ENCODE measurements at regions of chr14 and their contacts with region 1.

Region 1: GRCh38 chr14:74084277-74085046 is at the starts of genes ALDH6A1 and LIN52:
- DNase-seq: peak; percentile 94
- ATAC-seq: peak; percentile 87
- H3K4me3 Mint-ChIP-seq: peak within 1 kb of the TSS; percentile 99
- H3K27ac Mint-ChIP-seq: peak within 1 kb of the TSS; percentile 93
- H3K4me1 Mint-ChIP-seq: peaks cover 37% of the 10 kb centered on the region
- H3K27me3 Mint-ChIP-seq: no peaks in the 10 kb centered on the region
- CTCF ChIP-seq: no peak
- total RNA-seq, gene ALDH6A1: 9.8 and 11.5 TPM in 2 replicates
- total RNA-seq, gene LIN52: 7.6 and 12.4 TPM in 2 replicates

Region 2: DNA sequence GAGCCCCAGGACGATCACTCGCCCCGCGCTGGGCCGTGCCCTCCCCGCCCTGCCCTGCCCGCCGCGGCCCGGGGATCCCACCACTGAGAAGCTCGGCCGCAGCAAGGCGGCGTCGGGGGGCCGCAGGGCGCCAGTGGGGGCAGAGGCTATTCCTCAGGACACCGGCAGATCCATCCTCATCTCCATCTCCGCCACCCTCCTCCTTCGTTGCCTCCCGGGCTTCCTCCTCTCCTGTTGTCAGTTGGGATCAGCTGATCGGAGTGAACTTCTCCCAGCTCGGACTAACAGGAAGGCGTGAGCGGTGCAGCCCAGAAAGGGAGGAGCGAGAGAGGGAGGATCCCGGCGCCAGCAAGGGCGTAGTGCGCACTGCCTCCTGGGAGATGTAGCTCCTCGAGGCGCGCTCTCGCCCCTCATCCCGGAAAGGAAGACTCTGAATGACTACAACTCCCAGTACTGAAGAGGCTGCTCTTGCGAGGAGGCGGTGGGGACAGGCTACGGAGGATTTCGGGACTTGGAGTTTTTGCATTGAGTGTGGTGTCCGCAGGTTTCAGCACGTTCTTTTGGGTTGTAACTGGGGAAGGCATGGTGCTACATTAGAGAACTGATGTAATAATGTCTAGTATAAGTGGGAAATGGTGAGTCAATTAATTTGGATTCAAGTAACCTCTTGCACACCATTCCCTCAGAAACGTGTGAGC is 1057.5 kb before region 1 on chr14 and contains the start of gene ZFYVE1:
- CTCF ChIA-PET with region 1: no interaction called
- POLR2A ChIA-PET with region 1: no interaction called
- intact Hi-C with region 1: loop called (anchors 1 kb)
- DNase-seq: peak; percentile 76
- ATAC-seq: peak; percentile 99
- H3K4me3 Mint-ChIP-seq: peak within 1 kb of the TSS; percentile 98
- H3K27ac Mint-ChIP-seq: peak within 1 kb of the TSS; percentile 88
- H3K4me1 Mint-ChIP-seq: peaks cover 42% of the 10 kb centered on the region
- H3K27me3 Mint-ChIP-seq: no peaks in the 10 kb centered on the region
- CTCF ChIP-seq: no peak
- total RNA-seq, gene ZFYVE1: 12.7 and 16.5 TPM in 2 replicates

Region 3: DNA sequence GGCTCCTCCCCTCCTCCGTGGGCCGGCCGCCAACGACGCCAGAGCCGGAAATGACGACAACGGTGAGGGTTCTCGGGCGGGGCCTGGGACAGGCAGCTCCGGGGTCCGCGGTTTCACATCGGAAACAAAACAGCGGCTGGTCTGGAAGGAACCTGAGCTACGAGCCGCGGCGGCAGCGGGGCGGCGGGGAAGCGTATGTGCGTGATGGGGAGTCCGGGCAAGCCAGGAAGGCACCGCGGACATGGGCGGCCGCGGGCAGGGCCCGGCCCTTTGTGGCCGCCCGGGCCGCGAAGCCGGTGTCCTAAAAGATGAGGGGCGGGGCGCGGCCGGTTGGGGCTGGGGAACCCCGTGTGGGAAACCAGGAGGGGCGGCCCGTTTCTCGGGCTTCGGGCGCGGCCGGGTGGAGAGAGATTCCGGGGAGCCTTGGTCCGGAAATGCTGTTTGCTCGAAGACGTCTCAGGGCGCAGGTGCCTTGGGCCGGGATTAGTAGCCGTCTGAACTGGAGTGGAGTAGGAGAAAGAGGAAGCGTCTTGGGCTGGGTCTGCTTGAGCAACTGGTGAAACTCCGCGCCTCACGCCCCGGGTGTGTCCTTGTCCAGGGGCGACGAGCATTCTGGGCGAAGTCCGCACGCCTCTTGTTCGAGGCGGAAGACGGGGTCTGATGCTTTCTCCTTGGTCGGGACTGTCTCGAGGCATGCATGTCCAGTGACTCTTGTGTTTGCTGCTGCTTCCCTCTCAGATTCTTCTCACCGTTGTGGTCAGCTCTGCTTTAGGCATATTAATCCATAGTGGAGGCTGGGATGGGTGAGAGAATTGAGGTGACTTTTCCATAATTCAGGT is 947.9 kb before region 1 on chr14 and contains the start of gene PSEN1:
- CTCF ChIA-PET with region 1: no interaction called
- POLR2A ChIA-PET with region 1: no interaction called
- intact Hi-C with region 1: loop called (anchors 5 kb)
- DNase-seq: peak; percentile 99
- ATAC-seq: peak; percentile 92
- H3K4me3 Mint-ChIP-seq: peak within 1 kb of the TSS; percentile 95
- H3K27ac Mint-ChIP-seq: peak within 1 kb of the TSS; percentile 98
- H3K4me1 Mint-ChIP-seq: peaks cover 33% of the 10 kb centered on the region
- H3K27me3 Mint-ChIP-seq: no peaks in the 10 kb centered on the region
- CTCF ChIP-seq: no peak
- total RNA-seq, gene PSEN1: 38.6 and 42.9 TPM in 2 replicates

Region 4: GRCh38 chr14:73397810-73398209 is 686.7 kb before region 1 on chr14:
- CTCF ChIA-PET with region 1: no interaction called
- POLR2A ChIA-PET with region 1: no interaction called
- intact Hi-C with region 1: no loop called
- DNase-seq: no peak
- ATAC-seq: no peak
- H3K4me3 Mint-ChIP-seq: no peak overlapping the region
- H3K27ac Mint-ChIP-seq: no peak overlapping the region
- H3K4me1 Mint-ChIP-seq: peaks cover 63% of the 10 kb centered on the region
- H3K27me3 Mint-ChIP-seq: no peaks in the 10 kb centered on the region
- CTCF ChIP-seq: no peak

Region 5: GRCh38 chr14:73633116-73634010 is 451.1 kb before region 1 on chr14:
- CTCF ChIA-PET with region 1: no interaction called
- POLR2A ChIA-PET with region 1: no interaction called
- intact Hi-C with region 1: no loop called
- DNase-seq: peak; percentile 52
- ATAC-seq: peak; percentile 83
- H3K4me3 Mint-ChIP-seq: peak overlapping the region; percentile 83
- H3K27ac Mint-ChIP-seq: peak overlapping the region; percentile 12
- H3K4me1 Mint-ChIP-seq: peaks cover 4% of the 10 kb centered on the region
- H3K27me3 Mint-ChIP-seq: peaks cover 11% of the 10 kb centered on the region
- CTCF ChIP-seq: no peak

Region 6: GRCh38 chr14:73851644-73852382 is 232.6 kb before region 1 on chr14 and contains the start of gene PTGR2:
- CTCF ChIA-PET with region 1: no interaction called
- POLR2A ChIA-PET with region 1: no interaction called
- intact Hi-C with region 1: loop called (anchors 5 kb)
- DNase-seq: peak; percentile 81
- ATAC-seq: peak; percentile 96
- H3K4me3 Mint-ChIP-seq: peak within 1 kb of the TSS; percentile 93
- H3K27ac Mint-ChIP-seq: peak within 1 kb of the TSS; percentile 96
- H3K4me1 Mint-ChIP-seq: peaks cover 21% of the 10 kb centered on the region
- H3K27me3 Mint-ChIP-seq: no peaks in the 10 kb centered on the region
- CTCF ChIP-seq: no peak
- total RNA-seq, gene PTGR2: 4.6 and 4.8 TPM in 2 replicates

Region 7: DNA sequence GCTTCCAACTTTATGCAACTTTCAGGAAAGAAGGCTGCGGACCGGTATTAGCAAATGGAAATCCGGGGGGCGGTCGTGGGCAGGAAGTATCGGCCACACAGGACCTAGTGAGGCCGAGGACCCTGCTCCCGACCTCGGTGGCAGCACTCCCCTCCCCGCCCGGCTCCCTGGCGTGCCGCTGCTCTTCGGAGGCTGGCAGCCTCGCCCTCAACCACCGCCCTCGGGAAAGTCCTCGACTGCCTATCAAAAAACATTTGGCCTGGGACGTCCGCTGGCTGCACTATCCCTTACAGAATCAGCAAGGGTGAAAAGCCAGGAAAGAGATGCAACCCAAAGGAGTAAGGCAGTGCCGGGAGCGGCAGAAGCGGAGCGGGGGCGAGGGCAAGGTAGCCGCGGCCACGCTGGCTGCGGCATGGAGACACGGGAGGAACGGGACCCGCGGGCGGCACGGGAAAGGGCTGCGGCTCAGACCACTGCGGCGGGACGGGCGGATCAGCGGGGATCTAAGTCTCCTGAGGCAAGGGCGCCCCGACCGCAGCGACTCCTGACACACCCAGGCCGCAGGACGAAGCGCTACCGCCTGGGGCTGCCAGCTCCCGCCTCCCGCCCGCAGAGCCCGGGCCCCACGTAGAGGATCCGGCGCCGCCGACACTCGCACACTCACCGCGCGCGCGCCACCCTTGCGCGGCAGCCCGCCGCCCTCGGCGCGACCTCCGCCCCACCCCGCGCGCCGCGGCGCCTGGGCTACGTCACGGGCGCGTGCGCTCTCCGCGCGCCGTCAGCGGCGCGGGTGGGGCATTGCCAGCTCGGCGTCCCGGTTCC is 65.7 kb before region 1 on chr14 and contains the starts of genes BBOF1 and ENTPD5:
- CTCF ChIA-PET with region 1: no interaction called
- POLR2A ChIA-PET with region 1: no interaction called
- intact Hi-C with region 1: loop called (anchors 1 kb)
- DNase-seq: peak; percentile 82
- ATAC-seq: peak; percentile 96
- H3K4me3 Mint-ChIP-seq: peak within 1 kb of the TSS; percentile 95
- H3K27ac Mint-ChIP-seq: peak within 1 kb of the TSS; percentile 88
- H3K4me1 Mint-ChIP-seq: peaks cover 14% of the 10 kb centered on the region
- H3K27me3 Mint-ChIP-seq: no peaks in the 10 kb centered on the region
- CTCF ChIP-seq: no peak
- total RNA-seq, gene BBOF1: 1.6 and 2.2 TPM in 2 replicates
- total RNA-seq, gene ENTPD5: 9.3 and 10.4 TPM in 2 replicates

Region 8: DNA sequence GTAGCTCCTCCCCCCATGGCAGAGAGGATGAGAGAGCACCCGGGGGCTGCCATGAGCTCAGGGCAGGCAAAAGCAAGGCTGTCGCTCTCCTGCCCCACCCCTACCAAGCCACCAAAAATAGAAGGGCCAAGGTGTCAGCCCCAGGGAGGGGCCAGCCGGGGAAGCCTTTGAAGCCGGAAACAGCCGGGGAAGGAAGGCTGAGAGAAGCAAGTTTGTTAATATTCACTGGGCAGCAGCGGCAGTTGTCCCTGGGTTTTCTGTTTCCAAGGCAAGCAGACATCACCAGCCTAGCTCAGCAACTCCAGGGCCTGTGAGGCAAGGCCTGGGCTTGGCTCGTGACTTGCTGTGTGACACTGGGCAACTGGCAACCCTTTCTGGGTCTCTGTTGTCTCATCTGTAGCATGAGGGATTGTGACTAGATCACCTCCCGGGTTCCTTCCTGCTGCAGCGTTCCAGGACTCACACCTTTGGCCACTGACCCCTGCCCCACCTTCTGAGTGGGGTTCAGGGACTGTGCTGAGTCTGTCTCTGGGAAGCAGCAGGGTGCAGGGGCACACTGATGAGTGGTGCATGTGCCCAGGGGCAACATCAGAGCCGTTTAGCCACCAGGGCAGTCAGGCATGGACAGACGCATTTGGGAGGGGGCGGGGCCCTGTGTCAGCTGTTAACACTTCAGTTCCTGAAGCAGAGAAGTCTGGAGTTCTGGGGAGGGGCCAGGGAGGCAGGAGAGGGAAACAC is 317.2 kb after region 1 on chr14:
- CTCF ChIA-PET with region 1: no interaction called
- POLR2A ChIA-PET with region 1: interaction called, 3 read pairs
- intact Hi-C with region 1: loop called (anchors 1 kb)
- DNase-seq: peak; percentile 74
- ATAC-seq: peak; percentile 90
- H3K4me3 Mint-ChIP-seq: peak overlapping the region; percentile 87
- H3K27ac Mint-ChIP-seq: peak overlapping the region; percentile 98
- H3K4me1 Mint-ChIP-seq: peaks cover 54% of the 10 kb centered on the region
- H3K27me3 Mint-ChIP-seq: no peaks in the 10 kb centered on the region
- CTCF ChIP-seq: no peak

Measured in activated B cell treated with CpG ODN at 0.5 μM for 24 hours (primary cell).